Heart right ventricle (tissue), 16 donors: ENCODE measurements at regions of chr16 and their contacts with region 1.

Region 1: DNA sequence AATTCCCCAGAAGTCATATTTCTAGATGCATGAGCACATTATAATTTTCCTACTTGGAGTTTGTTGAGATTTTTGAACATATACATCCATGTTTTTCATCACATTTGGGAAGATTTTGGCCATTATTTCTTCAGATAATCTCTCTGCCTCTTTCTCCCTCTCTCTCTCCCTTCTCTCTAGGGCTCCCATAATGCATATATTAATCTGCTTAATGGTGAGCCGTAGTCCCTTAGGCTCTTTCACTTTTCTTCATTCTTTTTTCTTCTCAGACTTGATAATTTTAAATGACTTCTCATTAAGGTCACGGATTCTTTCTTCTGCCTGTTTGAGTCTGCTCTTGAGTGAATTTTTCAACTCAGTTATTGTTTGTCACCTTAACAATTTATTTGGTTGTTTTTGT is 101.5 kb downstream of the IRX3 start:
- DNase-seq: no peak
- ATAC-seq: no peak
- H3K4me3 ChIP-seq: no peak overlapping the region
- H3K27ac ChIP-seq: no peak overlapping the region
- H3K4me1 ChIP-seq: no peaks in the 10 kb centered on the region
- H3K27me3 ChIP-seq: peaks cover 0 to 6% (median 0%) of the 10 kb centered on the region in 7 donors
- CTCF ChIP-seq: no peak

Region 2: GRCh38 chr16:54462151-54462651 is 277.2 kb after region 1 on chr16:
- intact Hi-C with region 1: no loop called
- DNase-seq: no peak
- ATAC-seq: no peak
- H3K4me3 ChIP-seq: no peak overlapping the region
- H3K27ac ChIP-seq: no peak overlapping the region
- H3K4me1 ChIP-seq: no peaks in the 10 kb centered on the region
- H3K27me3 ChIP-seq: no peaks in the 10 kb centered on the region
- CTCF ChIP-seq: no peak

Region 3: DNA sequence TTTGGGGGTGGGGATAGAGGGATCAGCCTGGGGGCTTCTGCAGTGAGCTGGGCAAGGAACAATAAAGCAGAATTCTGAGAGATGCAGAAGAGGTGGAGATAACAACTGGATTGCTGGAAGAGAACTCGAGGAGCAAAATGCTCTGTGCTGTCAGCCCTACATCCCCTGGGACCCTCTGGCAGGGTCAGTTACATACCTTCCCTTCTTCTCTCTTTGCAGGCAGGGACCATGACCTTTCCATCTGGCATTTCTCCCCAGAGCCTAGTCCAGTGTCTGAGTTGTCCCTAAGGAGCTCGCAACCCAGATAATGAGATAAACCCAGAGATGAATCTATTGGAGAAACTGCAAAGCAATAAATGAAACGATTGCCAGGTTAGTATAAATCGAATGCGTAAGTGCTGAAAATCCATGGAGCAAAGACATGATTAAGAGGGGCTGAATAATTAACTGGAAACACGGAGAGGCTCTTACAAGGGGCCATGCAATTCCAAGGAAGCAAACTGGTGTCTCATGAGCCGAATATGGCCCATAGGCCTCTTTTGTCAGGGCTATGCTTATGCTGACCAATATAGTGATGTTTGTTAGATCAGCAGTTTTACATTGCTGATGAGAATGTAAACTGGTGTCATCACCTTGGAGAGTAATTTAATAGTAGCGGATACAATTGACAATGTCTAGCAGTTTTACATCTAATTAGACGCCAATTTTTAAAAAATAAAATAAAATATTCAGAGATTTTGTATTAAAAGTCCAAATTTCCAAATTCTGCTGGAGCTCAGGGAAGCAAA is 616.2 kb after region 1 on chr16:
- intact Hi-C with region 1: loop called in 1 of 10 experiments (anchors 5 kb)
- DNase-seq: no peak
- ATAC-seq: no peak
- H3K4me3 ChIP-seq: no peak overlapping the region
- H3K27ac ChIP-seq: no peak overlapping the region
- H3K4me1 ChIP-seq: peaks cover 0 to 5% (median 0%) of the 10 kb centered on the region in 9 donors
- H3K27me3 ChIP-seq: no peaks in the 10 kb centered on the region
- CTCF ChIP-seq: no peak